Mucosa of descending colon (tissue), 3 donors: ENCODE measurements at regions of chr14 and their contacts with region 1.

Region 1: GRCh38 chr14:60628892-60629291 is 20.4 kb downstream of the SIX1 start:
- DNase-seq: no peak
- ATAC-seq: no peak
- H3K4me3 ChIP-seq: no peak overlapping the region
- H3K4me1 ChIP-seq: peaks cover 3% of the 10 kb centered on the region
- CTCF ChIP-seq: no peak

Region 2: DNA sequence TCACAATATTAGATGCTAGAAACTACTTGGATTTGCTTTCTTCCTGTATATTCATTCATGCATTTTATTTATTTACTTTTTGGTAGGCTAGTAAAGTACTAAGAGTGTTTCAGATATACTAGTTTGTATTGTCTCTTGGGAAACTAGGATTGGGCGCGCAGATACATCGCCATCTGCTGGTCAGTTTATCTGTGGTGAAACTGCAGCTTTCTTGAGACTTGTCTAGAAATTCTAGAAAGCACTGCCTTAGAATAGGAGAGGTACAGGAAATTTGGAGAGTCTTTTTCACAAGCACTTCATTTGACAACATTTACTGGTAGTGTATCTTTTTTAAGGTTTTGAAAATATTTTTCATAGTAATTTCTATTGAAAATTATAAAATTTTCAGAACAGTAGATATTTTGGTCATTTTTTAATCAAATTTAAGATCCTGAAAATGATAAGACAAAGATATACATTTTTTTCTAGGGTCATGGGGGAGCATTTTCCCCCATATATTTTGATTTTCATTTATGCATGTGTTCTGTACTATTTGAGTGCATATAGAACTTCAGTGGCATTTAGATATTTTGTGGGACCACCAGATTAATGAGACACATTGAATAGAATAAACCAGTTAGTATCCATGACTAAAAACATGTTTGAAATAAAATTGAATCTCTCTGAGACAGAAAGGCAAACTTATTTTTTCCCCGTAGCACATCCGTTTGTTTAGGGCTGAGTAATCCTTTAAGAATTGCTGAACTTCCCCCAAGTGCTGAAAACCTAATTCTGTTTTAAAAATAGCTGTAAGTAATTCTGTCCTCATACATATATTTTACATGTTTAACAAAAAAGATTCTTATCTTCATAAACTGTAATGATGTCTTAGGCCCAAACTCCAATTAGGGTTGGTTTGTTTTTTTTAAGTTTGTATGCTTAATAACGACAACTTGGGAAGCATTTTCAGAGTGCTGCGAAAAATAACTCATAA is 396.6 kb after region 1 on chr14:
- intact Hi-C with region 1: loop called (anchors 5 kb)
- DNase-seq: peak in 2 of 3 donors; percentile 41 to 85
- ATAC-seq: peak; percentile 63
- H3K4me3 ChIP-seq: no peak overlapping the region
- H3K4me1 ChIP-seq: no peaks in the 10 kb centered on the region
- CTCF ChIP-seq: peak; percentile 59